ENCODE measurements at regions of chr5 and their contacts with region 1.

Region 1: DNA sequence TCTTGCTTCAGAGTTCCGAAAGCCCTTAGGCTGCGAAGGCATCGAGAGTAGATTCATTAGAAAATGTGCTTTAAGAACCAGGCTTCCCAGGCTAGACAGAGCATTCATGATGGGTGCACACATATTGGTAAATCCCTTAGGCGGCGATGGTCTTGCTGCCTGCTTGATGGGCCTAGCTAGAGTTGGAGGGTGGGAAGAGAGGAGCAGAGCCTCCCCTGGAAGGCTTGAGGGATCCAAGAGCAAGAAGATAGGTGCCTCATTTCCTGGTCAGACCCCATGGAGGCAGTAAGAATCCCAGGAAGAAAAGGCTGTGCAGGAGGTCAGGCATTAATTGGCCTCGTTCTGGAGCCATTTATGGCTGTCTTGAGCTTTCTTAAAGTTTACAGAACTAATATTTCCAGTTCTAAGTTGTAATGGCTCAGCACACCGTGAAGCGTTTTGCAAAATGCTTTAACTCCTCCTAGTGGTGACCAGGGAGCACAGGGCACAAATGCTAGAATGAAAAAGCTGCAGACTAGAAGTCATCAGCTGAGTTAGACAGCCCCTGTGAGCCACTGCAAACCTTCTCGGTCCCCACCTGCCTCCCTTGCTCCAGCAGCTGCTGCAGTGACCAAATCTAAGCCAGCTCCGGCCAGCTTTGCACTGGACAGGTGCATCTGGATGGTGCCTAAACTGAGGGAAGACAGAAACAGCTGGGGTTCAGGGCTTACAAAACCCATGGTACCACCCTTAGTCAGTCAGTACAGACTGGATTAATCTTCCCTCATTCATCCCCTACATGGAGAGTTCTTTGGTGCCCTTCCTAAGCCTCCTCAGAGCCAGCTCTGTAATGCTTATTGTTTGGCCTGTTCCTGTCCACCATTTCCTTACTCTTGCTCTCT is 14.7 kb downstream of the SLC45A2 start:
- DNase-seq: peak; percentile 26
- H3K4me3 Mint-ChIP-seq: no peak overlapping the region
- H3K27ac Mint-ChIP-seq: no peak overlapping the region
- H3K4me1 Mint-ChIP-seq: peaks cover 34% of the 10 kb centered on the region
- H3K27me3 Mint-ChIP-seq: no peaks in the 10 kb centered on the region

Region 2: GRCh38 chr5:33433303-33434240 is 536.2 kb before region 1 on chr5:
- CTCF ChIA-PET with region 1: interaction called, 33 read pairs
- DNase-seq: no peak
- H3K4me3 Mint-ChIP-seq: no peak overlapping the region
- H3K27ac Mint-ChIP-seq: no peak overlapping the region
- H3K4me1 Mint-ChIP-seq: peaks cover 6% of the 10 kb centered on the region
- H3K27me3 Mint-ChIP-seq: no peaks in the 10 kb centered on the region

Region 3: GRCh38 chr5:33588654-33589372 is 381.0 kb before region 1 on chr5:
- CTCF ChIA-PET with region 1: interaction called, 22 read pairs
- DNase-seq: peak; percentile 68
- H3K4me3 Mint-ChIP-seq: no peak overlapping the region
- H3K27ac Mint-ChIP-seq: no peak overlapping the region
- H3K4me1 Mint-ChIP-seq: no peaks in the 10 kb centered on the region
- H3K27me3 Mint-ChIP-seq: peaks cover 4% of the 10 kb centered on the region

Region 4: DNA sequence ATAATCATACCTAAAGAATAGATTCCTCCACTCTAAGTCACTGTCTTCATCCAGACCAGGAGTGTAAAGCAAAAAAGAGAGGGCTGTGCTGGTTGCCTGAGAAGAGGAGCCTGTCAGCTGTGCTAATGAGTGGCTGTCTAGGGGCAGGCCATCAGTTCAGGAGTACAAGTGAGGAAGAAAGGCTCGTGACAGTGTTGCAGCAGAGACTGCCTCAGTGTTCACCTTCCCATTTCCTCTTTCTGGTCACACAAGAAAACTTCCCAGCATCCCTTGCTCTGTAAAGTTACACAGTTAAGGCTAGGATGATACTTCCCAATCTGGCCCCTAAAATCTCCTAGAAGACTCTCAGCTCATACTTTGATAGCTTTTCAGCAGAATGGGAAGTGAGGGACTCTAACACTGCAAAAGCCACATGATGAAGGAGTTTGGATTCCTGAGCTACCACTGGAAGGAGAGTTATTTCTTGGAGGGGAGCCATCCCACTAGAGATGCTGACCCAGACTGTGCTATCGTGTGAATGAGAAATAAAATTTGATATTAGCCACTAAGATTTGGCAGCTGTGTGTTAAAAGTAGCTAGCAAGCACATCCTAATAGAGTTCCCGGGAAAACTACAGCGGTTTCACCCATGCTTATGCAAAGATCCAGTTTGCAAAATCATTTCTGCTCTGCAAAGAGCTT is 145.2 kb before region 1 on chr5:
- CTCF ChIA-PET with region 1: no interaction called
- DNase-seq: no peak
- H3K4me3 Mint-ChIP-seq: no peak overlapping the region
- H3K27ac Mint-ChIP-seq: no peak overlapping the region
- H3K4me1 Mint-ChIP-seq: no peaks in the 10 kb centered on the region
- H3K27me3 Mint-ChIP-seq: peaks cover 14% of the 10 kb centered on the region

Region 5: DNA sequence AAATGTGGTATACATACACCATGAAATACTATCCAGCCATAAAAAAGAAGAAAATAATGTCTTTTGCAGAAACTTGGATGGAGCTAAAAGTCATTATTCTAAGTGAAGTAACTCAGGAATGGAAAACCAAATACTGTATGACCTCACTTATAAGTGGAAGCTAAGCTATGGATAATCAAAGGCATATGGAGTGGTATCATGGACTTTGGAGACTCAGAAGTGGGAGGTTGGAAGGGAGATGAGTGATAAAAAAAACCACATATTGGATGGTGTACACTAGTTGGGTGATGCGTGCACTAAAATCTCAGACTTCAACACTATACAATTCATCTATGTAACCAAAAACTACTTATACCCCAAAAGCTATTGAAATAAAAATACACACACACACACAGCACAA is 102.6 kb before region 1 on chr5:
- CTCF ChIA-PET with region 1: no interaction called
- DNase-seq: no peak
- H3K4me3 Mint-ChIP-seq: no peak overlapping the region
- H3K27ac Mint-ChIP-seq: no peak overlapping the region
- H3K4me1 Mint-ChIP-seq: no peaks in the 10 kb centered on the region
- H3K27me3 Mint-ChIP-seq: peaks cover 2% of the 10 kb centered on the region

Region 6: DNA sequence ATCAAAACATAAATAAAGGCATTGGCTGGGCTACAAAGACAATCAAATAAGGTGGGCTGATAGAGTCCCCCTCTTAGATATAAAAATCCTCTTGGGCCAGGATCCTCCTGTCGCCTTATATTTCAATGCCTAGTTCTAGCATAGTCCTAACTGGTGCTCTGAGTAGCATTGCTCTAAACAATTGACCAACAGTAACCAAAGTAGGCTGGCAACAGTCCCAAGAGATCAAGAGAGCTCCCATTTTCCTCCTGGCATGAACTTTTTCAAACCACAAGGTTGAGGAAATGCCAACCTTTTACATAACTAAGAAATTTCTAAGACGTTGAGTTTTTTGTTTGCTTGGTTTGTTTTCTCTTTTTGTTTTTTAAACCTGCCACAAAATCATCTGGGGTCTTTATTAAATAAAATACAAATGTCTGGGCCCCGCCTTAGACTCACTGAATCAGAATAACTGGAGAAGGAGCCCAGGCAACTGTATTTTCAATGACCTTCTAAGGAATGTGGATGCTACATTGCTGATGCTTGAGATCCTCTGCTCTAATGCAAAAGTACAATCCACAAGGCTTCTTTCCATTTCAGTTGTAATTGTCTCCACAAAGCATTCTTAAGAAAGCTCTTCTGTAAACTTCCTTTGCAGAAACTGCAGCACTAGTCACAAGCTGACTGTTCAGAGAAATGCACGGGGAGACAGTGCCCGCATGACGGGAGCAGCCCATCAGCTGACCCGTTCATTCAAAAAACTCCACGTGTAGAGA is 11.8 kb after region 1 on chr5:
- CTCF ChIA-PET with region 1: interaction called, 14 read pairs
- DNase-seq: no peak
- H3K4me3 Mint-ChIP-seq: no peak overlapping the region
- H3K27ac Mint-ChIP-seq: no peak overlapping the region
- H3K4me1 Mint-ChIP-seq: no peaks in the 10 kb centered on the region
- H3K27me3 Mint-ChIP-seq: no peaks in the 10 kb centered on the region

Measured in activated naive CD4-positive, alpha-beta T cell treated with anti-CD3 and anti-CD28 coated beads, Interleukin-2, amount 10 ng/mL, durations not matched to agents 7 days and 5 days (primary cell).